ENCODE measurements at regions of chr10 and their contacts with region 1.

Region 1: DNA sequence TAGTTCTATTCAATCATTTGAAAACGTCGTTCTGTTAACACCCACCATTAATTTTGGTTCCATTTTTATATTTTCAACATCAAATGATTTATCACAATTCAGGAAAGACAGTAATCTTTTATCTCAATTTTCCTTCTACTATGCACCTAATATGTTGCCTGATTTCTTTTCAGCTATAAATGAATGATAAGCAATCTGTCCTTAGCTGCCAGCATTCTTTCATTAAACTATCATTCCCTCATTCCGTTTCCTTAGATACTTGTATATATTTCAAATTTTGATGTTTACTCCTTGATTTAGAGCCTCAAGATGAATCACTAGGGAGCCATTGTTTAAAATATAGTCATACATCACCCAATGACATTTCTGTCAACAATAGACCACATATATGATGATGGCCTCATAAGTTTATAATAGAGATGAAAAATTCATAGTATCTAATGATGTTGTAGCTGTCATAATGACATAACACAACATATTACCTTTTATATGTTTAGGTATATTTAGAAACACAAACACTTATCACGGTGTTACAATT is 661.7 kb downstream of the IPMK start:
- DNase-seq: no peak
- H3K4me3 Mint-ChIP-seq: no peak overlapping the region
- H3K27ac Mint-ChIP-seq: no peak overlapping the region
- H3K4me1 Mint-ChIP-seq: no peaks in the 10 kb centered on the region
- H3K27me3 Mint-ChIP-seq: no peaks in the 10 kb centered on the region

Region 2: DNA sequence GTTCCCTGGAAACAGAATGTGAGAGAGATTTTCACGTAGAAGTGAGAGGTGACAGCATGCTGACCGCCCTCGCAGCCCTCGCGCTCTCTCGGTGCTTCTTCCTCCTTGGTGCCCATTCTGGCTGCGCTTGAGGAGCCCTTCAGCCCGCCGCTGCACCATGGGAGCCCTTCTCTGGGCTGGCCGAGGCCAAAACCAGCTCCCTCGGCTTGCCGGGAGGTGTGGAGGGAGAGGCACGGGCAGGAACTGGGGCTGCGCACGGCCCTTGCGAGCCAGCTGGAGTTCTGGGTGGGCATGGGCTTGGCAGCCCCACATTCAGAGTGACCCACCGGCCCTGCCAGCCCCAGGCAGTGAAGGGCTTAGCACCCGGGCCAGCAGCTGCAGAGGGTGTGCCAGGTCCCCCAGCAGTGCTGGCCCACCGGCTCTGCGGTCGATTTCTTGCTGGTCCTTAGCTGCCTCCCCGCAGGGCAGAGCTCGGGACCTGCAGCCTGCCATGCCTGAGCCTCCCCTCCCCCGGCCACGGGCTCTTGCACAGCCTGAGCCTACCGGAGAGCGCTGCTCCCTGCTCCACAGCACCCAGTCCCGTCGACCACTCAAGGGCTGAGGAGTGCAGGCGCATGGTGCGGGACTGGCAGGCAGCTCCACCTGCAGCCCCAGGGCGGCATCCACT is 356.3 kb before region 1 on chr10:
- intact Hi-C with region 1: no loop called
- DNase-seq: no peak
- H3K4me3 Mint-ChIP-seq: no peak overlapping the region
- H3K27ac Mint-ChIP-seq: no peak overlapping the region
- H3K4me1 Mint-ChIP-seq: no peaks in the 10 kb centered on the region
- H3K27me3 Mint-ChIP-seq: no peaks in the 10 kb centered on the region

Region 3: DNA sequence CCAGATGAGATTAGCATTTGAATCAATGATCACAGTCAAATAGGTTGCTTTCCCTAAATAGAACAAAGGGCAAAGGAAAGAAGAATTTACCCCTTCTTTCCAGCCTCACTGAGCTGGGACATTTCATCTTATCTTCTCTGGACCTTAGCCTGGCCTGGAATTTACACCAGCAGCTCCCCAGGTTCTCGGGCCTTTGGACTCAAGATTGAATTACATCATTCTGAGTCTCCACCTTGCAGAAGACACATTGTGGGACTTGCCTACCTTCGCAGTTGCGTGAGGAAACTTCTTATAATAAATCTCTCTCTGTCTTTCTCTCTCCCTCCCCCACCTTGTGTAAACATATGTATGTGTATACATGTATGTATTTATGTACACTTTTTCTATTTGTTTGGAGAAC is 70.7 kb before region 1 on chr10:
- intact Hi-C with region 1: loop called (anchors 10 kb)
- DNase-seq: no peak
- H3K4me3 Mint-ChIP-seq: no peak overlapping the region
- H3K27ac Mint-ChIP-seq: no peak overlapping the region
- H3K4me1 Mint-ChIP-seq: no peaks in the 10 kb centered on the region
- H3K27me3 Mint-ChIP-seq: no peaks in the 10 kb centered on the region

Region 4: GRCh38 chr10:57562211-57562610 is 43.8 kb before region 1 on chr10:
- intact Hi-C with region 1: no loop called
- DNase-seq: no peak
- H3K4me3 Mint-ChIP-seq: no peak overlapping the region
- H3K27ac Mint-ChIP-seq: no peak overlapping the region
- H3K4me1 Mint-ChIP-seq: no peaks in the 10 kb centered on the region
- H3K27me3 Mint-ChIP-seq: no peaks in the 10 kb centered on the region

Region 5: DNA sequence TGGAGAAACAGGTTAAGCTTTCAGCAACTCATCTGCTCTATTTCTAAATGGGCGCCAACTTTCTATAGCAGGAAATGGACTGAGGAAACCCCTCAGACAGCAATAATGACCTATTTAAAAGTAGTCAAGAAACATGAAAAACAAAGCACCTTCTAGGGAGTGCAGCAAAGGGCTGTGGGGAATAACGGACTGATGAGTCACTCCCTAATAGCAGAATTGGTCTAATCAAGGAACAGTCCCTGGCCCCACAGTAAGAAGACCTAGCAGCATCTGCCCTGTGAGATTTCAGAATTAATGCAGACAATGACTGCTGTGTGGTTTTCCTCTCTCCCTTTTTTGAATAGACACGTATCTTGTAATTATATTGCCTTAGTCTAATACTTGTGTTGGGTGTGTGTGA is 58.8 kb after region 1 on chr10:
- intact Hi-C with region 1: no loop called
- DNase-seq: no peak
- H3K4me3 Mint-ChIP-seq: no peak overlapping the region
- H3K27ac Mint-ChIP-seq: no peak overlapping the region
- H3K4me1 Mint-ChIP-seq: no peaks in the 10 kb centered on the region
- H3K27me3 Mint-ChIP-seq: no peaks in the 10 kb centered on the region